HepG2 (cell line): ENCODE measurements at regions of chr13 and their contacts with region 1.

Region 1: DNA sequence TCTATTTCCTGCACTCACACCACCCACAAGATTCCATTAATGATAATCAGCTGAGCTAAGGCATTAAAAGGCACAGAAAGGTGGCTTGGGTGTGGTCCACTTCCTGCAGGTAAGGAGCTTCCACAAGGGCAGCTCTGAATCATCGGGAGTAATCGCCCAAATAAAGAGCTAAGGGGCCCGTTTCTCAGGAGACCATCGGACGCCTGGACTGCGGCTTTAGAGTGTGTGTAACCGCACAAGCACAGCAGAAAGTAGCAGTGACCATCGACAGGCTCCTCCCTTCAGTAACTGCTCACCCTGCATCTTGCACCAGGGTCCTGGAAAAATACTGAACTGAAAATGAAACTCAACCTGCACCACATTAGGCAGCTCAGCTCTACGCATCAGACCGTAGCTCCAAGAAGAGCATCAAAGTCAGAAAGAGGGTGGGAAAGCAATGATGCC is 6.0 kb downstream of the STK24 start:
- DNase-seq: peak; percentile 77
- ATAC-seq: peak; percentile 75
- H3K4me3 ChIP-seq: peak overlapping the region; percentile 11 to 59 (median 39)
- H3K27ac ChIP-seq: peak overlapping the region; percentile 74
- H3K4me1 ChIP-seq: peaks cover 90% of the 10 kb centered on the region
- H3K27me3 ChIP-seq: no peaks in the 10 kb centered on the region; a peak in 1 of 5 replicates
- CTCF ChIP-seq: no peak
- EP300 ChIP-seq: no peak
- POLR2A ChIP-seq: peak in 1 of 2 experiments; percentile 30; a peak in 1 of 4 replicates
- RAD21 ChIP-seq: no peak

Region 2: DNA sequence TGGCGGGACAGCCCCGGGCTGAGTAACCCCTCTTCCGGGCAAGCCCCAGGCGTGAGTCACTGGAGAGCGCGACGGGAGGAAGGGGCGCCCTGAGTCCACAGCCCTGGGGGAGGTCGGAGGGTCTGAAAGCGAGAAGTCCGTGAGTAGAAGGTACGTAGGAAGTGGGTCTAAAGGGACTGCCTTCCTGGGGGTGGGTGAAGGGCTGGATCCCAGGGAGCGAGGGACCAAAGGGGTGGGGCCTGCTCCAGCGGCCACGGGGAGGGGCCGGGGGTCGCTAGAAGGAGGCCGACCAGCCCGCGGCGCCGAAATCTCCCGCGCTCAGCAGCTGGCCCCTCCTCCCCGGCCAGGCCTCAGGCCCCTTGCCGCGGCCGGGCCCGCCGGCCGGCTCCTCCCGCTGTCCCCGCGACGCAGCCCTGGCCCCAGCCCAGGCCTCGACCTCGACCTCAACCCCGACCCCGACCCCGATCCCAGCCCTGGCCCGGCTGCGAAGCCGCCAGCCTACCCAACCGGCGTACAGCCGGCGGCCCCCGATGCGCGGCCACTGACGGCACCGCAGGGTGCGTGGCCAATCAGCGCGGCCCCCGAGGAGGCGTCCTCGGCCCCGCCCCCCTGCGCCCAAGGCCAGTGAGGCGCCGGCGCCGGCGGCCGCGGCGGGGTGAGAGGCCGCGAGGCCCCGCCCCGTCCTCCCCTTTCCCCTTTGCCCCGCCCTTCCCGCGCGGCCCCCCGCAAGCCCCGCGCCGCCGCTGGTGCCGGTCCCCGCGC is 594.9 kb before region 1 on chr13:
- CTCF ChIA-PET with region 1: no interaction called
- POLR2A ChIA-PET with region 1: no interaction called
- in situ Hi-C with region 1: no loop called
- intact Hi-C with region 1: loop called (anchors 5 kb)
- DNase-seq: peak; percentile 86
- ATAC-seq: peak; percentile 95
- H3K4me3 ChIP-seq: peak overlapping the region; percentile 73 to 97 (median 83)
- H3K27ac ChIP-seq: peak overlapping the region; percentile 94
- H3K4me1 ChIP-seq: peaks cover 42% of the 10 kb centered on the region
- H3K27me3 ChIP-seq: no peaks in the 10 kb centered on the region; a peak in 1 of 5 replicates
- CTCF ChIP-seq: no peak
- EP300 ChIP-seq: peak in 1 of 2 experiments; percentile 51; a peak in 2 of 4 replicates
- POLR2A ChIP-seq: peak; percentile 66 to 79; a peak in 3 of 4 replicates
- RAD21 ChIP-seq: peak; percentile 26; the same call in 1 of the 2 replicates